Posterior cingulate gyrus (tissue), 11 donors: ENCODE measurements at regions of chr19 and their contacts with region 1.

Region 1: GRCh38 chr19:46860125-46860845 is 512 bp upstream of the ARHGAP35 start:
- DNase-seq: peak; percentile 96 to 100 (median 98)

Region 2: DNA sequence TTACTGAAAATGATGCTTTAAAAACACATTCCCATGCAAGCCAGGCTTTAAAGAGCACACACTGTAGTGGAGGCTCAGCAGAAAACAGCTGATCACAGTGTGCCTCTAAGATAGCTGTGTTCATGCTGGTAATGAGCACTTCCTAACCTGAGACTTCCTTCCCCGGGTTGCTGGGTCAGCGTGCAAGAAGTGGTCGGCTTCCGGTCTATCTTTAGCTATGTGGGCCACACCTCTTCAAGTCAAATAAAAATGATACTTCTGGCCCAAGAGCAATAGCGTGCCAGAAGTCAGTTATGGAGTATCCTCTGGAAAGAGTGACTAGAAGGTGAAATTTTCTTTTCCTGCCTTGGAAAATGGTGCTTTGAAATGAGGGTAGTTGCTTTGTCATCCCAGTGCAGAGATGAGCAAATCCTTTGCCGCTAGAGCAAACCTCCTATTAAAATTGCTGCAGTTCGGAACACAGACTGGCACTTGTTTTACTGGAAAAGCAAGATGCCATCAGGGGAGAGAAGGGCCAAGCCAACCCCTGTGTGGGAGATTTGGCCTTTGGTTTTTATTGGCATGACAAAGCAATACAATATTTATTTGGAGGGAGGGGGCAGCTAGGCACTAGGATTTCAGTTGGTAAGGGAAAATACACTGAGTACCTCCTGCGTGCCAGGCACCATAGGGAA is 64.7 kb after region 1 on chr19:
- intact Hi-C with region 1: loop called (anchors 2 kb)
- DNase-seq: no peak

Region 3: DNA sequence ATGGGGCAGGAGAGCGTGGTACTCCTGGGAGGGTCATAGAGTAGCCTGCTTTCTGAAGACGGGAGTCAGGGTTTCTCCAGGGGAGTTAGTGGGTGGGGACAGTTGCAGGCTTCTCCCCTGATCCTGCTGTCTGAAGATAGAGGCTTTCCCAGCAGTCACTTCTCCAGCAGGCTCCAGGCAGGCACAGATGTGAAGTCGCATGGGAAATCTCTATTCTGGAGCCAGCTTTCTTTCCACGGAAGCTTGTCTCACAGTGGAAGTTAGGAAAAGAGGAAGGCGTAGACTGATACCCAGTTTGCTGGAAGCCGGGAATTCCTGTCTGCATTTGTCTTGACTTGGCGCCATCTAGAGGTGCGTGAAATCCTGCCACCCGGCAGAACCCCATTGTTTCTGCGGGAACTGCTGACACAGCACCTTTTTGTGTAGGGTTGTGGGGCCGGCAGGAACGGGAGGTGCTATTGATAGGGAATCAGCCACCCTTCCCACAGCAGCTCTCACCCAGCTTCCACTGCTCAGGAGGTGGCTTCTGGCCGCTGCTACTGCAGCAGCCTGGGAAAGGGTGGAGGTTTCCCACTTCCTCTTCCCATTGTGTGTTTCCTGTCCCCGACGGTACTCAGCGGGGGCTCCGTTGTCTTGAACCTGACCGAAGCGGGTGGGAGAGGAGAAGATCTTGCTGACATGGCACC is 130.8 kb after region 1 on chr19:
- intact Hi-C with region 1: loop called (anchors 1 kb)
- DNase-seq: peak; percentile 72 to 98 (median 88)

Region 4: DNA sequence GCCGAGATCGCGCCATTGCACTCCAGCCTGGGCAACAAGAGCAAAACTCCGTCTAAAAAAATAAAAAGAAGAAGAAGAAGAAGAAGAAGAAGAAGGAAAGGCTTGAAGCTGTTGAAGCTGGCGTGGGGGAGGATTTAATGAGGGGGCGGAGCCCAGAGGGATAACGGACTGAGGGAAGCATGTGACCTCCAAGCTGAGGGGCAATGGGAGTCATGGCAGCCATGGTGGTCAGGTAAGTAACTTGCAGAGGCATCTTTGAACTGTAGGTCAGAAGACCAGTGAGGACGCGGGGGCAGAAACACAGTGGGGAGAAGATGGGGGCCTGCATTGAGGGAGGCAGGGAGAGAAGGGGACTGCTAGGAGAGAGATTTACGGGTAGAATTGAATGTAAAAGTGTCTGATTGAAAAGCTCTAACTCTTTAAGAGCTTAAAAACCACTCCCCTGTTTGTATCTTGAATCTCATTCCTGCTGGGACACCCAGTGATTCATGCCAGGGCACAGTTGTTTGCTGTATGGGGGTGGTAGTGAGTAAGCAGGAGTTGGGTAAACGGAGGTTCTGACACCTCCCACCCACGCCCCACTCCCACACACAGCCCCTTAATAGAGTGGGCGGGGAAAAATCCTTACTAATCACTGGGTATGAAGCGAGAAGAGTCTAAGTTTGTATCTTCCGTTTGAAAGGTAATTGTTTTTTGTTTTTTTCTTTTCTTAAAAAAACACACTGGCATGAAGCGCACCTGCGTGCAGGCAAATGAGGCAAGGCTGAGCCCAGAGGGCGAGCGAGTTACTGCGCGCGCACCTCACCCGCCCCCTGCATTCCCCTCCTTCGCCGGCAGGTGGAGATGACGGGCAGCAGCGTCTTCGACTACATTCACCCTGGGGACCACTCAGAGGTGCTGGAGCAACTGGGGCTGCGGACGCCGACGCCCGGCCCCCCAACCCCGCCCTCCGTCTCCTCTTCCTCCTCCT is 175.1 kb after region 1 on chr19:
- intact Hi-C with region 1: loop called (anchors 1 kb)
- DNase-seq: peak; percentile 78 to 98 (median 90)

Region 5: DNA sequence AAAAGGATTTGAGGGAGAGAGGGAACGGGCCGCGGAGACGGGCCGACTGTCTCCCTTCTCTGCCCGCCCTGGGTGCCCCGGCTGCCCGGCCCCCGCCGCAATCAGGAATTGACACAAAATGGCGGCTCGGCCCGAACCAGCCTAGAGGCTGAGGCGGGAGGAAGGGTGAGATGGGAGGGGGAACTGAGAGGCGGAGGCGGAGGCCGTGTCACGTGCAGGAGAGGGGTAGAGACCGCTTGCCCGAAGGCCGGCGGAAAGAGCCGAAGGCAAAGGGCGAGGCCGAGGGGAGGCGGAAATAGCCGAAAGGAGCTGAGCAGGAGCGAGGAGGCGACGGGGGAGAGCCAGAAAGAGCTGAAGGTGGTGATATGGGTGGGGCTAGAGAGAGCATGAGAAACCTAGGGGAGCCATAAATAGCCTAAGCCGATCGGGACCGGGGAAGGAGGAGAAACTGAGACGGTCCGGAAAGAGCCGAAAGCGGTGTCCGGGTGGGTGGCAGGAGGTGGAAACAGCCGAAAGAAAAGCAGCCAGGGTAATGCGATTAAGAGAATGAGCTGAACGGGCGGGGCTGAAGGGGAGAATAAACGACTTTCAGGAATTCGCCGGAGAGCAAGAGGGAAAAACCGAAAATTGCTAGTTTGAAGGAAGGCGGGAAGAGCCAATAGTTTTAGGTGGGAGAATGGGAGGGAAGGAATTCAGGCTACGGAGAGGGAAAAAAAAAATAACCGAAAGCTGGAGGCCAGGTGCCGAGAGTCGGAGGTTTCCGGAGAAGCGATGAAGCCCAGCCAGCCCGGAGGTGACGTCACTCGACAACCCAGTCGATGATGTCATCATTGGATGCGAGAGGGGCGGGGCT is 252.9 kb after region 1 on chr19 and contains the start of gene ZC3H4:
- intact Hi-C with region 1: loop called (anchors 5 kb)
- DNase-seq: peak; percentile 97 to 100 (median 99)